PC-3 (cell line): ENCODE measurements at regions of chr3 and their contacts with region 1.

Region 1: DNA sequence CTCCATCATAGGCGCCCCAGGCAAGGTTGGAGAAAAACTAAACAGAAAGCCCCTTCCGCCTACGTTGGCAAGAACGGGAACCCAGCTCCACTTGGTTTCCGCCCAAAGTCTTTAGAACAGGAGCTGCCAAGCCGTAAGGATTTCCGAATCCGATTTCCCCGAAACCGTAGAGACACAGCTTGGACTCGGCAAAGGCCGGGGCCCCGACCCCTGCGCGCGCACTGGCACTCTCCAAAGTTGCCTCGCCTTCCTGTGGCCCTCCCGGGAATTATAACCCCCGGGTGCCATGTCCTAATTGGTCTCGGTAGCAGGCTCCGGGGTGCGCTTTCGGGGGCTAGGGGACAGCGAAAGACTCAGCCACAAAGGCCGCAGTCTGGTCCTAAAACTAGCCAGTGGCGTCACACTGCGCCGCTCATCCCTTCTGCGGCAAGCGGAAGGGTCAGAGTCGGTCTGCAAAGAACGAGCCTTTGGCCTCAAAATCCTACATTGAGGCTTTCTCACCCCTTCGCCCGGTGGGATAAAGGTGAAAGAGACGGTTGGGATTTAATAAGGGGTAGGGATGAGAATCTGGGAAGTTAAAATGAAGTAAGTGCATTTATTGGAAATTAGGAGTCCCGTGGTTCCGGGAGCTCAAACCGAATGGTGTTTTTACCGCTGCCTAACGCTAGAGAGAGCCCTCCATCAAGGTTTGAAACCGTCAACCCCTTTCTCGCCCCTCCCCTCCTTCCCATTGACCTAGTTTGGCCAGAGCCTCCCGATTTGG is 6.8 kb downstream of the BCL6 start:
- DNase-seq: peak; percentile 94
- ATAC-seq: peak; percentile 42
- H3K4me3 ChIP-seq: peak overlapping the region; percentile 93
- H3K27ac ChIP-seq: peak overlapping the region; percentile 56
- H3K4me1 ChIP-seq: peaks cover 35% of the 10 kb centered on the region
- H3K27me3 ChIP-seq: no peaks in the 10 kb centered on the region
- CTCF ChIP-seq: peak; percentile 88

Region 2: DNA sequence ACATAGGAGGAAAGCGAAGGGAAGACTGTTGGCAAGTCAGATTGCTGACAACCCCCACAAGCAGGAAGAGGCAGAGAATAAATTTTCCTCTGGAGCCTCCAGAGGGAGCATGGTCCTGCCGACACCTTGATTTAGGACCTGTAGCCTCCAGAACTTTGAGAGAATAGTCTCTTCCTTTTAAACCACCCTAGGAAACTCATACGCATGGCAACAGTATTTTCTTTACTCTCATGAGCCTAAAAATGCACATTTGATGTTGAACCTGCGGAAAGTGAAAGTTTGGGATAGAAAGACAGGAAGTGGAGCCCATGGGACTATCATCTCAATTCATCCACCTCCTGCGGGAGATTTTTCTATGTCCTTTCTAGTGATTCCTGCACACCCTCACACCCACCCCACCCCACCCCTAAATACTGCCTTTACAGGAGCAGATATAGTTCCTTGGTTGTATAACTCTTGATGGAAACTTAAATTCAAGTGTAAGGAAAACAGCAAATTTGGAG is 298.8 kb after region 1 on chr3:
- CTCF ChIA-PET with region 1: no interaction called
- POLR2A ChIA-PET with region 1: no interaction called
- intact Hi-C with region 1: loop called (anchors 2 kb)
- DNase-seq: peak; percentile 65
- ATAC-seq: peak; percentile 90
- H3K4me3 ChIP-seq: no peak overlapping the region
- H3K27ac ChIP-seq: no peak overlapping the region
- H3K4me1 ChIP-seq: peaks cover 16% of the 10 kb centered on the region
- H3K27me3 ChIP-seq: no peaks in the 10 kb centered on the region
- CTCF ChIP-seq: peak; percentile 69

Region 3: GRCh38 chr3:188262913-188263683 is 524.6 kb after region 1 on chr3:
- CTCF ChIA-PET with region 1: interaction called, 7 read pairs
- POLR2A ChIA-PET with region 1: interaction called, 3 read pairs
- intact Hi-C with region 1: loop called (anchors 2 kb)
- DNase-seq: peak; percentile 96
- ATAC-seq: peak; percentile 71
- H3K4me3 ChIP-seq: peak overlapping the region; percentile 46
- H3K27ac ChIP-seq: peak overlapping the region; percentile 96
- H3K4me1 ChIP-seq: peaks cover 75% of the 10 kb centered on the region
- H3K27me3 ChIP-seq: no peaks in the 10 kb centered on the region
- CTCF ChIP-seq: no peak

Region 4: GRCh38 chr3:188431553-188431952 is 693.0 kb after region 1 on chr3:
- CTCF ChIA-PET with region 1: no interaction called
- POLR2A ChIA-PET with region 1: no interaction called
- intact Hi-C with region 1: loop called (anchors 2 kb)
- DNase-seq: peak; percentile 84
- ATAC-seq: peak; percentile 98
- H3K4me3 ChIP-seq: no peak overlapping the region
- H3K27ac ChIP-seq: peak overlapping the region; percentile 75
- H3K4me1 ChIP-seq: peaks cover 28% of the 10 kb centered on the region
- H3K27me3 ChIP-seq: no peaks in the 10 kb centered on the region
- CTCF ChIP-seq: no peak

Region 5: GRCh38 chr3:188539631-188540194 is 801.2 kb after region 1 on chr3:
- CTCF ChIA-PET with region 1: no interaction called
- POLR2A ChIA-PET with region 1: interaction called, 3 read pairs
- intact Hi-C with region 1: loop called (anchors 5 kb)
- DNase-seq: no peak
- ATAC-seq: no peak
- H3K4me3 ChIP-seq: no peak overlapping the region
- H3K27ac ChIP-seq: no peak overlapping the region
- H3K4me1 ChIP-seq: peaks cover 27% of the 10 kb centered on the region
- H3K27me3 ChIP-seq: no peaks in the 10 kb centered on the region
- CTCF ChIP-seq: no peak

Region 6: GRCh38 chr3:188881954-188882641 is 1143.6 kb after region 1 on chr3:
- CTCF ChIA-PET with region 1: interaction called, 4 read pairs
- POLR2A ChIA-PET with region 1: no interaction called
- intact Hi-C with region 1: loop called (anchors 5 kb)
- DNase-seq: peak; percentile 90
- ATAC-seq: peak; percentile 89
- H3K4me3 ChIP-seq: peak overlapping the region; percentile 18; the same call in 1 of the 2 replicates
- H3K27ac ChIP-seq: peak overlapping the region; percentile 62
- H3K4me1 ChIP-seq: peaks cover 28% of the 10 kb centered on the region
- H3K27me3 ChIP-seq: no peaks in the 10 kb centered on the region
- CTCF ChIP-seq: no peak

Region 7: GRCh38 chr3:189148081-189148507 is 1409.6 kb after region 1 on chr3:
- CTCF ChIA-PET with region 1: no interaction called
- POLR2A ChIA-PET with region 1: no interaction called
- intact Hi-C with region 1: loop called (anchors 1 kb)
- DNase-seq: peak; percentile 82
- ATAC-seq: peak; percentile 80
- H3K4me3 ChIP-seq: no peak overlapping the region
- H3K27ac ChIP-seq: no peak overlapping the region
- H3K4me1 ChIP-seq: no peaks in the 10 kb centered on the region
- H3K27me3 ChIP-seq: no peaks in the 10 kb centered on the region
- CTCF ChIP-seq: peak; percentile 90